A549 (cell line): ENCODE measurements at regions of chr17 and their contacts with region 1.

Region 1: DNA sequence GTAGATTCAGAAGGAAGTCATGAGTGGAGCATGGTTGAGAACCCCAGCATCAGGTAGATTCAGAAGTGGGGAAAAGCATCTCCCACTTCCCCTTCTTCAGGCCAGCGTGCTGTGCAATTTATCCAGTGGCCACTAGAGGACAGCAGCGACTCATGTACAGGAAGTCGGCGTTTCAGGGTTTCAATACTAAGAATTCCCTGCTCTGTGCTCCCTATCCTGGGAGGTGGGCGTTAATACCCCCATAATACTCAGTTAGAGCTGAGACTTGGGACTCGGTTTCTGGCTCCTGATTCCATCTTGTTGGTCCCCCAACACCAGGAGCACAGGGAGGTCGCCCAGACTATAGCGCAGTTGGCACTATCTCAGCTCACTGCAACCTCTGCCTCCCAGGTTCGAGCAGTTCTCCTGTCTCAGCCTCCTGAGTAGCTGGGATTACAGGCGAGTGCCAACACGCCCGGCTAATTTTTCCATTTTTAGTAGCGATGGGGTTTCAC is 75.3 kb upstream of the AMZ2 start:
- DNase-seq: peak; percentile 18 to 71
- ATAC-seq: peak; percentile 84 to 92
- H3K4me3 ChIP-seq: no peak overlapping the region
- H3K27ac ChIP-seq: no peak overlapping the region
- H3K4me1 ChIP-seq: no peaks in the 10 kb centered on the region
- CTCF ChIP-seq: peak; percentile 99
- EP300 ChIP-seq: no peak
- POLR2A ChIP-seq: no peak
- RAD21 ChIP-seq: peak; percentile 96 to 98

Region 2: DNA sequence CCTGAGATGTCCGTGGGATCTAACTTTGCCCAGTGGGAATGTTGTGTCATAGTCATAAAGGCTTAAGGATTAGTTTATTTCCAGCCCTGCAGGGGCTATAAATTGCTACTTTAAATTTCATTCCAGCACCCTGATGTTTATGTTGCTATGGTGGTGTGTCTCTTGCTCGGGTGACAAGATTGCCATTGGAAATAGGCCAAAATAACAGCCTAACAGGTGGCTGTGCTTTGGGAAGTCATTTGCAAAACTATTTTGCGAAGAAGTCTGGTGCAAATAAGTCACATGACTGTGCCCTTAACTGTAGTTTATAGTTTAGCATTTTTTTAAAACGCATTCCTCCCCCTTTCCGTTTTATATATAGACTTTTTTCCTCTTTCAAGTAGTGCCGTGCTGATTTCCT is 772.3 kb before region 1 on chr17:
- CTCF ChIA-PET with region 1: no interaction called
- POLR2A ChIA-PET with region 1: no interaction called
- DNase-seq: no peak
- ATAC-seq: no peak
- H3K4me3 ChIP-seq: no peak overlapping the region
- H3K27ac ChIP-seq: no peak overlapping the region
- H3K4me1 ChIP-seq: no peaks in the 10 kb centered on the region
- CTCF ChIP-seq: no peak
- EP300 ChIP-seq: no peak
- POLR2A ChIP-seq: no peak
- RAD21 ChIP-seq: no peak

Region 3: DNA sequence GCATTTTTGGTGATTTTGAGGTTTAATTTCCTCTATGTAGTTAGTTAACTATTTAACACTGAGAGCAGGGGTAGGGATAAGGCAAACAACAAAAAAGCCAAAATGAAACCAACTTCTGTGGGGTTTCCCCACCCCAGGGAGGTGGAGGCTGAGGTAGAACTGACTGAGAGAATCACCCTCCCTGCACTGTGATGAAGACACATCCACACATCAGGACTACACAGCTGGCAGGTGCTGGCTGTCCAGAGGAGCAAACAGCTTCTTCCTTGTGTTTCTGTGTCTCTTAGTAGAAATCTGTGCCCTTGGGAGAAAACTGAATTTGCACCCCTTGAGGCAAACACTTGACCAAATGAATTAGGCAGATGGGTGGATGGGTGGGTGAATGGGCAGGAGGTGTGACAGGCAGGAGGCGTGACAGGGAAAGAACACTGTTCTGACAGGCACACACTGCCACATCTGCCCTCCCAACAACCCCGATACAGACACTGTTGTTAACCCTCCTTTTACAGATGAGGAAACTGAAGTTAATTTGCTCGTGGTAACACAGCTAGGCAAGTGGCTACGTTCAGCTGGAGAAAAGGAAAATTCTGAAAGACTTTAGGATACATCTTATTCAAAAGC is 12.4 kb after region 1 on chr17:
- CTCF ChIA-PET with region 1: interaction called, 77 read pairs
- POLR2A ChIA-PET with region 1: no interaction called
- DNase-seq: no peak
- ATAC-seq: no peak
- H3K4me3 ChIP-seq: no peak overlapping the region
- H3K27ac ChIP-seq: no peak overlapping the region
- H3K4me1 ChIP-seq: no peaks in the 10 kb centered on the region
- CTCF ChIP-seq: no peak
- EP300 ChIP-seq: no peak
- POLR2A ChIP-seq: no peak
- RAD21 ChIP-seq: no peak

Region 4: GRCh38 chr17:68205251-68205807 is 32.8 kb after region 1 on chr17:
- CTCF ChIA-PET with region 1: interaction called, 135 read pairs
- POLR2A ChIA-PET with region 1: no interaction called
- DNase-seq: peak; percentile 90 to 91
- ATAC-seq: peak; percentile 83 to 92
- H3K4me3 ChIP-seq: peak overlapping the region; percentile 84
- H3K27ac ChIP-seq: peak overlapping the region; percentile 87 to 94
- H3K4me1 ChIP-seq: peaks cover 9% of the 10 kb centered on the region; the same call in 1 of the 3 replicates
- CTCF ChIP-seq: peak; percentile 87
- EP300 ChIP-seq: no peak
- POLR2A ChIP-seq: peak; percentile 71
- RAD21 ChIP-seq: peak in 1 of 2 experiments; percentile 51; a peak in 3 of 5 replicates

Region 5: GRCh38 chr17:68457539-68458259 is 285.2 kb after region 1 on chr17:
- CTCF ChIA-PET with region 1: interaction called, 59 read pairs
- POLR2A ChIA-PET with region 1: no interaction called
- DNase-seq: peak; percentile 97 to 98
- ATAC-seq: peak; percentile 87 to 93
- H3K4me3 ChIP-seq: peak overlapping the region; percentile 92
- H3K27ac ChIP-seq: no peak overlapping the region
- H3K4me1 ChIP-seq: peaks cover 17% of the 10 kb centered on the region
- CTCF ChIP-seq: no peak
- EP300 ChIP-seq: no peak
- POLR2A ChIP-seq: no peak
- RAD21 ChIP-seq: no peak

Region 6: GRCh38 chr17:68470961-68471360 is 298.5 kb after region 1 on chr17:
- CTCF ChIA-PET with region 1: interaction called, 55 read pairs
- POLR2A ChIA-PET with region 1: no interaction called
- DNase-seq: no peak
- ATAC-seq: no peak
- H3K4me3 ChIP-seq: no peak overlapping the region
- H3K27ac ChIP-seq: no peak overlapping the region
- H3K4me1 ChIP-seq: no peaks in the 10 kb centered on the region; the same call in 2 of the 3 replicates
- CTCF ChIP-seq: no peak
- EP300 ChIP-seq: no peak
- POLR2A ChIP-seq: no peak
- RAD21 ChIP-seq: no peak